ENCODE measurements at regions of chr1 and their contacts with region 1.

Region 1: GRCh38 chr1:151739590-151740375 is 18.5 kb downstream of the RIIAD1 start:
- DNase-seq: no peak
- H3K4me3 Mint-ChIP-seq: no peak overlapping the region
- H3K27ac Mint-ChIP-seq: no peak overlapping the region
- H3K4me1 Mint-ChIP-seq: no peaks in the 10 kb centered on the region
- H3K27me3 Mint-ChIP-seq: peaks cover 24% of the 10 kb centered on the region

Region 2: DNA sequence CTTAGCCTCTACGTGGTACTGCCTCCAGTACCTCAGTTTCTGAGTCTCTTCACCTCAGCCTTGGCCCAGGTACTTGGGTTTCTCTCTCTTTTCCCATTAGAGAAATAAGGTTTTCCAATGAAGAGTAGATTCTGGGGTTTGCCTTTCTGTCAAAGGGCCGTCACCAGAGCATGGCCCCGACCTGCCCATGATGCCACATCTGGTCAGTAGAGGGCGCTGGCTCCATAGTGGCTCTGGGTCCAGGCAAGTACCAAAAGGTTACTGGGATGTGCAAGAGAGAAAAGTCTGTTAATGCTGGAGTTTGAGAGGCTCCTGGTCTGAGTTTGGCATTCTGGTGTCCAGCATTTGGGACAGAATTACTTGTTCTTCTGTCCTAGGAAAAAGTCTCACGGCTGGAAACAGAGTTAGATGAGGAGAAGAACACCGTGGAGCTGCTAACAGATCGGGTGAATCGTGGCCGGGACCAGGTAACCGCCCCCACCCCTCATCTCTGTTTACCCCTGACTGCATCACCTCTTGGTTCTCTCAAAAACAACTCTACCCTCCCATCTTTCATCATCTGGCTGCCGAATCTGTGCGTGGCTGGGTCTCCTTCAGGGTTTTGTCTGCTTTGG is 205.0 kb before region 1 on chr1:
- intact Hi-C with region 1: loop called (anchors 2 kb)
- DNase-seq: peak; percentile 66
- H3K4me3 Mint-ChIP-seq: no peak overlapping the region
- H3K27ac Mint-ChIP-seq: no peak overlapping the region
- H3K4me1 Mint-ChIP-seq: peaks cover 3% of the 10 kb centered on the region
- H3K27me3 Mint-ChIP-seq: no peaks in the 10 kb centered on the region

Region 3: GRCh38 chr1:151594143-151594625 is 145.6 kb before region 1 on chr1:
- intact Hi-C with region 1: loop called (anchors 10 kb)
- DNase-seq: peak; percentile 71
- H3K4me3 Mint-ChIP-seq: peak overlapping the region; percentile 9
- H3K27ac Mint-ChIP-seq: no peak overlapping the region
- H3K4me1 Mint-ChIP-seq: peaks cover 8% of the 10 kb centered on the region
- H3K27me3 Mint-ChIP-seq: peaks cover 37% of the 10 kb centered on the region

Measured in activated T-helper 2 cell treated with anti-CD3 and anti-CD28 coated beads, Interferon-gamma antibody, Interleukin-2, Interleukin-4, amounts not matched to agents 10 μg/mL and 5 μg/mL and 100 μg/mL, durations not matched to agents 14 hours and 24 hours and 36 hours (primary cell).